PC-3 (cell line): ENCODE measurements at regions of chr1 and their contacts with region 1.

Region 1: DNA sequence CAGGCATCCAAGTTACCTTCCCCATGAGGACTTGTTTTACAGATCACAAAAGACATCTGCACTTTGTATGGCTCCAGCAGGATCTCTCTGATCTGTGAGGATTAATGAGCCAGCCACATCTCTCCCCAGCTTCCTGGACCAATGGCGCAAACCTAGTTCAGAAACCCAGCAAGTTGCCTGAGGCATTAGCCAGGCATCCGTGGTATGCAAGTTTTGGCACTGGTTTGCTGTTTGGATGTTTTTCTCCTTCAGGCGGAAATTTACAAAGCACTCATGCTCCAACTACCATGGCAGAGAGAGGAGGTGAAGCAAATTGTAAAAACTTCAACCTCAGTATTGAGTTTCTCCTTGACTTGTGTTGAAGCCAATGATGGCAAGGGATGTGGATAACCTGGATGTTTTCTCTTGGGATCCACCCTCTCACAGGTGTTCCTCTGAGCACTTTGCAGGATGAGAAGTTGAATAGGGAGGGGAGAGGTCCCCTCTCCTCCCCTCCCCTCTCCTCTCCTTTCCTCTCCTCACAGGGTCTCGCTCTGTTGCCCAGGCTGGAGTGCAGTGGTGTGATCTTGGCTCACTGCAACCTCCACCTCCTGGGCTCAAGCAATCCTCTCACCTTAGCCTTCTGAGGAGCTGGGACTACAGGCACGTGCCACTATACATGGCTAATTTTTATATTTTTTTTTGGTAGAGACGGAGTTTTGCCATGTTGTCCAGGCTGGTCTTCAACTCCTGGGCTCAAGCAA is 25.6 kb upstream of the ENO1 start:
- DNase-seq: peak; percentile 98
- ATAC-seq: peak; percentile 85
- H3K4me3 ChIP-seq: no peak overlapping the region
- H3K27ac ChIP-seq: peak overlapping the region; percentile 49
- H3K4me1 ChIP-seq: peaks cover 41% of the 10 kb centered on the region
- H3K27me3 ChIP-seq: no peaks in the 10 kb centered on the region
- CTCF ChIP-seq: no peak

Region 2: DNA sequence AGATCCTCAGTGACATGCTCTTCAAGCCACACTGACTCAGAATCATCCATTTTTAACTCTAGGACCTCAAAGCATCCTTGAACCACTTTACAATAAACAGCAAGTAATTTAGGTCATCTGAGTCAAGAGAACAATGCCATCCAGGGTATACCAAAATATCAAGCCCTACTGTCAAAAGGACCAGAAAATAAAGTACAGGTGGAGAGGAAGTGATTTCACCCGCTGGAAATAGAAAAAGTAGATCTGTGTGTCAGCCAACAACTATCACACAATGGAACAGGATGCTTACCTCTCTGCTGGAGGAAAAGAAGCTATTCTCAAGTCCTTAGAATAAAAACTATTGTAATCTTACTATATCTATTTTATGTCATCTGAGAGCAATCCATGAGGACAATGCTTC is 123.7 kb before region 1 on chr1:
- CTCF ChIA-PET with region 1: no interaction called
- POLR2A ChIA-PET with region 1: no interaction called
- intact Hi-C with region 1: no loop called
- DNase-seq: no peak
- ATAC-seq: no peak
- H3K4me3 ChIP-seq: no peak overlapping the region
- H3K27ac ChIP-seq: no peak overlapping the region
- H3K4me1 ChIP-seq: peaks cover 11% of the 10 kb centered on the region
- H3K27me3 ChIP-seq: no peaks in the 10 kb centered on the region
- CTCF ChIP-seq: no peak

Region 3: DNA sequence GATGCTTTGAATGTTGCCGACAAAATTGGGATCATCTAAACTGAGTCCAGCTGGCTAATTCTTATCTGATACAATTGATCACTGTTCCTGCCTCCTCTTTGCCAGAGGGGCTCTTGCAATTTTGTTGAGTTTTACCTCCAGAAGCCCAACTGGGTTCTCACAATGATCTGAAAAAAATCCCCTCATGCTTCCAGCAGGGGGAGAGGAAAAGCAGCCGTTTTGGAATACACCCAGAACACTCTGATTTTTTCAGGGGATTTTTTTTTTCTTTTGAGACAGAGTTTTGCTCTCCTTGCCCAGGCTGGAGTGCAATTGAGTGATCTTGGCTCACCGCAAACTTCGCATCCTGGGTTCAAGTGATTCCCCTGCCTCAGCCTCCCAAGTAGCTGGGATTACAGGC is 72.7 kb before region 1 on chr1:
- CTCF ChIA-PET with region 1: no interaction called
- POLR2A ChIA-PET with region 1: no interaction called
- intact Hi-C with region 1: no loop called
- DNase-seq: no peak
- ATAC-seq: no peak
- H3K4me3 ChIP-seq: no peak overlapping the region
- H3K27ac ChIP-seq: no peak overlapping the region
- H3K4me1 ChIP-seq: peaks cover 8% of the 10 kb centered on the region; the same call in 1 of the 2 replicates
- H3K27me3 ChIP-seq: no peaks in the 10 kb centered on the region
- CTCF ChIP-seq: peak; percentile 42; the same call in 1 of the 2 replicates

Region 4: DNA sequence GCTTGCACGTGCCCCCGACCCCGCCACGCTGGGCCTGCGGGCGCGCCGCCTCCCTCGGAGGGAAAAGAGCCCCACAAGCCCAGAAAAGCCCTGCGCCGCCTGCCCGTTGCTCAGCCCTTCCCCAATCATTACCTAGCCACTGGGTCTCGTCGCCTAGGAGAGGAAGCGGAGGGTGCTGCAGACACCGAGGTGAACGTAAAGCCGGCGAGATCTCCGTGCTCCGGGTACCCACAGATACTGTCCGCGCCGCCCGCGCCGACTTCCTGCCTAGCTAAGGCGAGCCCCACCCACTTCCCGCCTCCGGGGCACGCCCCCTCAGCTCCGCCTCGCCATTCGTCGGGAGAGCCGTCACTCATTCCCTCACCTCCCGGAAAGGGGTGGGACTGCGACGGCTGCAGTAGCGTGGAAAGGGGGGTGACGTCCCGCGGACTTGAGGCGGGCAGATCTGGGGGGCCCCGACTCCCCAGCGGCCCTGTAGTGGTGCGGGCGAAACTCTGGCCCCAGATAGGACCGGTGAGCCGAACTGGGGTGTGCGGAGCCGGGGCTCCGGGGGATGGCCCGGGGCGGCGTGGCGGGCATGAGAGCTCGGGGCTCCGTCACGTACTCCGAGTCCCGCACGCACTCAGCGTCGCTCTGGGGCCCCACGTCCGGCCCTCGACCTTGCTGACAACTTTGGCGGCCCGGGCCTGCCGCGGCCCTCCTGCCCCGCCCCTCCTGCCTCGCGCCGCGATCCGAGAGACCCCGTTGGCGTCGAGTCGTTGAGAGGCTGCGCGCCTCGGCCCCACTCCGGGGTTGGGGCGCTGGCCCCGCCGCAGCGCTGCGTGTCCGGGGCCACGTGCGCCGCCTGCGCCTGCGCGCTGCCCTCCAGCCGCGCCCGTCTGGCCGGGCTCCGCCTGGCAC is 25.4 kb before region 1 on chr1 and contains the start of gene ENO1:
- CTCF ChIA-PET with region 1: no interaction called
- POLR2A ChIA-PET with region 1: no interaction called
- intact Hi-C with region 1: loop called (anchors 2 kb)
- DNase-seq: peak; percentile 97
- ATAC-seq: peak; percentile 62
- H3K4me3 ChIP-seq: peak within 1 kb of the TSS; percentile 95
- H3K27ac ChIP-seq: peak within 1 kb of the TSS; percentile 97
- H3K4me1 ChIP-seq: peaks cover 39% of the 10 kb centered on the region
- H3K27me3 ChIP-seq: no peaks in the 10 kb centered on the region
- CTCF ChIP-seq: no peak
- total RNA-seq, gene ENO1: 3,669 and 3,712 TPM in 2 replicates

Region 5: DNA sequence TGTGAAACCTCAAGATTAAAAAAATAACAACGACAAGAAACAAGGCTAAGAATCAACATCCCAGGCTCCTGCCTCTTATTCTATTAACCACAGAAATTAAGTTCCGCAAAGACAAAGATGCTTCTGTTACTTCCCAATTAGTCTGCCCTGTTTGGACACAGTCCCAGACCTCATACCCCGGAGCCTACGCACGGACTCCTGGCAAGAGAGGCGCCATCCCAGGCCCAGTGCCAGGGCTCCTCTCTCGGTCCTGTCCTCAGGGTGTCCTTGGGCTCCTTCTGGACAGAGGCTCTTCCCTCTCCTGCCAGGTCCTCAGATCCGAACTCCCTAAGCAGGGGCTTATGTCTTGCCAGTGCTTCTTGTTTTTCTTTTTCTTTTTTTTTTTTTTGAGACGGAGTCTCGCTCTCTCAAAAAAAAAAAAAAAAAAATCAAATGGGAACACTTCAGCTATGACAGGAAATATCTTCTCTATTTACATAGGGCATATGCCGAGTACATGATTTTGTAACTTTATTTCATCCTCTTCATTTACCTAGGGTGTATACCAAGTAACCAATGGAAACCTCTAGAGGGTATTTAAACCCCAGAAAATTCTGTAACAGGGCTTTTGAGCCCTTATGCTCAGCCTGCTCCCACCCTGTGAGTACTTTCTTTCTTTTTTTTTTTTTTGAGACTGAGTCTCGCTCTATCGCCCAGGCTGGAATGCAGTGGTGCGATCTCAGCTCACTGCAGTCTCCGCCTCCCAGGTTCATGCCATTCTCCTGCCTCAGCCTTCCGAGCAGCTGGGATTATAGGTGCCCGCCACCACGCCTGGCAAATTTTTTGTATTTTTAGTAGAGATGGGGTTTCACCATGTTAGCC is 13.9 kb before region 1 on chr1:
- CTCF ChIA-PET with region 1: no interaction called
- POLR2A ChIA-PET with region 1: no interaction called
- intact Hi-C with region 1: loop called (anchors 1 kb)
- DNase-seq: peak; percentile 83
- ATAC-seq: peak; percentile 97
- H3K4me3 ChIP-seq: peak overlapping the region; percentile 60
- H3K27ac ChIP-seq: peak overlapping the region; percentile 27; the same call in 1 of the 2 replicates
- H3K4me1 ChIP-seq: peaks cover 18% of the 10 kb centered on the region
- H3K27me3 ChIP-seq: no peaks in the 10 kb centered on the region
- CTCF ChIP-seq: no peak

Region 6: GRCh38 chr1:8955406-8955805 is 51.3 kb after region 1 on chr1:
- CTCF ChIA-PET with region 1: no interaction called
- POLR2A ChIA-PET with region 1: no interaction called
- intact Hi-C with region 1: no loop called
- DNase-seq: no peak
- ATAC-seq: no peak
- H3K4me3 ChIP-seq: no peak overlapping the region
- H3K27ac ChIP-seq: no peak overlapping the region
- H3K4me1 ChIP-seq: no peaks in the 10 kb centered on the region
- H3K27me3 ChIP-seq: no peaks in the 10 kb centered on the region
- CTCF ChIP-seq: no peak